Calu3 (cell line): ENCODE measurements at regions of chr1 and their contacts with region 1.

Region 1: DNA sequence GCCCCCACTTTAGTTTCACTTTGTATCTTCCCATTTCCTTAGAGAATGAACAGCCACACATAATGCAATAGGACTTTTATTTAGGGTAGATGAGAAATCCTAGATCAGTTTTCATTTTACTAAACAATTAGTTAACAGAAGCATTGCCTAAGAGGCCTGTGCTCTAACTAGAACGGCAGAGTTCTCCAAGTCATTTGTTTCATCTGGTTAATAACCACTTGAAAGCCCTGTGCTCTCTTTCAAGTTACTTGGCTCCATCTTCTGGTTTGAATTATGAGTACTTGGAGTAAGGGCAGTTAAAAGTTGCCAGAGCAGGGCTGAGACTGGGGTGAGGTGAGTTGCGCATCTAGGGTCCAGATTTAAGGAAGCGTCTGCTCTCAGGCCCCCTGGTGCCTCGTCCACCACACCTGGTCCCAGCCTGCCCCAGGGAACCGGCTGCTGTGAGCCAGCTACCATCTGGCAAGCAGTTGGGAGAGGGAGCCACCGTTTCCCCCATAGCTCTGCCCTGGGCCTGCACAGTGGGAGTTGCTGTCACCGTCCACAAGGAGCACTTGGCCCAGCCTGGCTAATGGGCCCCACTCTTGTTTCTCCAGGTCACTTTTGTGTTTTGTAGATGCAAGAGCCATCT is 18.1 kb upstream of the SLC44A3 start:
- DNase-seq: peak; percentile 38
- H3K4me3 Mint-ChIP-seq: peak overlapping the region; percentile 48
- H3K27ac Mint-ChIP-seq: peak overlapping the region; percentile 80
- H3K4me1 Mint-ChIP-seq: peaks cover 72% of the 10 kb centered on the region
- H3K27me3 Mint-ChIP-seq: no peaks in the 10 kb centered on the region
- CTCF ChIP-seq: peak; percentile 47

Region 2: DNA sequence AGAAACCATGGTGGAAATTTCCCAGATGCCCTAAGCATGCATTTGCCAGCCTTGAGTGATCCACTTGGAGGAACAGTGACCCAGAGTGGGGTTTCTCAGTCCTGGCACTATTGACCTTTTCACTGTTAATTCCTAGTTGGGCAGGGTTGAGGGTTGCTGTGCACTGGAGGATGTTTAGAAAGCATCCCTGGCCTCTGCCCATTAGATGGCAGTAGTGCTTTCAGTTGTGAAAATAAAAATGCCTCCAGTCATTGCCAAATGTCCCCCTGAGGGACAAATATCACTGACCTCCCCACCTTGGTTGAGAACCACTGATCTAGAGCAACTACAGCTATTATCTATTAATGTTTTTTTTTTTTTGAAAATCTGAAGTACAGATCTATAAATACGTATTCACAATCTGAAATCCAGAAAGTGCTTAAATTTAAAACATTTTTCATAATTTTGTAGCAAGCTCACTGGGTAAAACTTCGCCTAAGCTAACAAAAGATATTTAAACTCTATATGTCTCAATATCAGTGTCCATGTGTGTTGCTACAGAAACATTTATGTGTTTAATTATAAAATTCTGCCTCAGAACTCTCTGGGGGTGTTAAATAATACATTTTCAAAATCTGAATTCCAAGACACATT is 287.8 kb before region 1 on chr1:
- CTCF ChIA-PET with region 1: interaction called, 4 read pairs
- intact Hi-C with region 1: loop called (anchors 1 kb)
- DNase-seq: peak; percentile 45
- H3K4me3 Mint-ChIP-seq: no peak overlapping the region
- H3K27ac Mint-ChIP-seq: no peak overlapping the region
- H3K4me1 Mint-ChIP-seq: peaks cover 5% of the 10 kb centered on the region
- H3K27me3 Mint-ChIP-seq: no peaks in the 10 kb centered on the region
- CTCF ChIP-seq: peak; percentile 63

Region 3: GRCh38 chr1:94527447-94528031 is 274.5 kb before region 1 on chr1:
- CTCF ChIA-PET with region 1: interaction called, 18 read pairs
- intact Hi-C with region 1: loop called (anchors 1 kb)
- DNase-seq: peak; percentile 67
- H3K4me3 Mint-ChIP-seq: peak overlapping the region; percentile 5
- H3K27ac Mint-ChIP-seq: peak overlapping the region; percentile 83
- H3K4me1 Mint-ChIP-seq: peaks cover 68% of the 10 kb centered on the region
- H3K27me3 Mint-ChIP-seq: no peaks in the 10 kb centered on the region
- CTCF ChIP-seq: no peak

Region 4: DNA sequence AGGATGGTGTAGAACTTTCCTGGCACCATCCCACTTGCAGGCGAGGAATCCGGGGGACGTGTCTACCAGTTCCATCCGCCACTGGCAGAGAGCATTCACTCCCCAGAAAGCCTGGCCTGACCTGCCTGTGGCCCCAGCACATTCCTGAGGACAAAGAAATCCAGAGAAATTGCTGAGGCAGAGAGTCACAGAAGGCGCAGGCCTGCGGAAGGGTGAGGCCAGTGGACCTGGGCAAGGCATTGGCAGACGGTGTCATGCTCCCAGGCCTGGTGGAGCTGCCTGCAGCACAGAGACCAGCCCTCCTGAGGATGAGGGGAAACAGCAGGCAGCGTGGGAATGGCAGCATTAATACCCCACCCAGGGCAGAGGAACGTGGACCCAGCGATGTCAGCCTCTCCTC is 179.3 kb before region 1 on chr1:
- CTCF ChIA-PET with region 1: interaction called, 5 read pairs
- intact Hi-C with region 1: loop called (anchors 5 kb)
- DNase-seq: peak; percentile 87
- H3K4me3 Mint-ChIP-seq: peak overlapping the region; percentile 55
- H3K27ac Mint-ChIP-seq: peak overlapping the region; percentile 99
- H3K4me1 Mint-ChIP-seq: peaks cover 63% of the 10 kb centered on the region
- H3K27me3 Mint-ChIP-seq: no peaks in the 10 kb centered on the region
- CTCF ChIP-seq: no peak